ENCODE measurements at regions of chr21 and their contacts with region 1.

Region 1: DNA sequence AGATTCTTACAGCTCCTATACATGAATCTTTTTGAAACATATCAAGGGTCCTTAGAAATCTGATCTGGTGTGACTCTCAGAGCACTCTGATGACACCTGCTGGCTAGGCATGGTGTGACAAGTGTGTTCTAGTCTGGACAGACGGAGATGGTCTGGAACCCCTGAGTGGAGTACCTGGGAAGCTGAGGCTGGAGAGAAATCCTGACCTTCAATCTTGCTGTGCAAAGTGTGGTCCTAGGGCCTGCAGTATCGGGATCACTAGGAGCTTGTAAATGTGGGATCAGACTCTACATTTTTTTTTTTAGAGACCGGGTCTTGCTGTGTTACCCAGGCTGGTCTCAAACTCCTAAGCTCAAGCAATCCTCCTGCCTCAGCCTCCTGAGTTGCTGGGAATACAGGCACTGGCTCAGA is 78.6 kb upstream of the SOD1 start:
- DNase-seq: no peak
- H3K4me3 ChIP-seq: no peak overlapping the region
- CTCF ChIP-seq: peak; percentile 84

Region 2: GRCh38 chr21:31107871-31108270 is 473.0 kb before region 1 on chr21:
- CTCF ChIA-PET with region 1: interaction called, 18 read pairs
- POLR2A ChIA-PET with region 1: no interaction called
- DNase-seq: no peak
- H3K4me3 ChIP-seq: no peak overlapping the region
- CTCF ChIP-seq: no peak

Region 3: DNA sequence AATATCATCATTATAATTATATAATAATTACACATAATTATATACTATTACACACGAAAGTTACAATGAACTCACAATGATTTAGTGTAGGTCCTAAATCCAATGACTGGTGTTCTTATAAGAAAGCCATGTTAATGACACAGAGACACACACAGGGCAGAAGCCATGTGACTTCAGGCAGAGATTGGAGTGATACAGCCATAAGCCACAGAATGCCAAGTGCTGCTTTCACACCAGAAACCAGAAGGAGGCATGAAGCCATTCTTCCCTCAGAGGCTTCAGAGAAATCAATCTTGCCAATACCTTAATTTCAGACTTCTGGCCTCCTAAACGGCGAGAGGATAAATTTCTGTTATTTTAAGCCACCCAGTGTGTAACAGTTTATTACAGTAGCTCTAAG is 395.2 kb before region 1 on chr21:
- CTCF ChIA-PET with region 1: interaction called, 88 read pairs
- POLR2A ChIA-PET with region 1: no interaction called
- DNase-seq: no peak
- H3K4me3 ChIP-seq: no peak overlapping the region
- CTCF ChIP-seq: no peak

Region 4: GRCh38 chr21:31258073-31258472 is 322.8 kb before region 1 on chr21:
- CTCF ChIA-PET with region 1: interaction called, 10 read pairs
- POLR2A ChIA-PET with region 1: no interaction called
- DNase-seq: no peak
- H3K4me3 ChIP-seq: no peak overlapping the region
- CTCF ChIP-seq: no peak

Region 5: GRCh38 chr21:31548688-31549087 is 32.2 kb before region 1 on chr21:
- CTCF ChIA-PET with region 1: interaction called, 16 read pairs
- POLR2A ChIA-PET with region 1: no interaction called
- DNase-seq: no peak
- H3K4me3 ChIP-seq: no peak overlapping the region
- CTCF ChIP-seq: no peak

Region 6: DNA sequence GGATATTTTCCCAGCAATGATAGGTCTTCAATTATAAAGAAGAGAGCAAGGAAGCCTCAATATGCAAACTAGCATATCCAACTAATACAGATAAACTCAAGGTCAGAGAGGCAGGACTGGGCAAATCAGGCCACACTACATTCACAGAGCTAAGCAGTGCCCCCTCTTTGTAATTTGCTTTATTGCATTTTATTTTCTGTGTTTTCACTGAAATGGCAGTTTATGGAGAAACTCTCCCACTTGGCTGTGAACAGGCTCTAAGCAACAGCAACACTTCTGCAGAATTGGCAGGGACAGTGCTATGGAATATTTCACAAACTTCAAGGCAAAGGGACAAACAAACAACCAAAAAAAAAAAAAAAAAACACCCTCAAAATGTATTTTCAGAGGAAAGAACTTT is 14.8 kb before region 1 on chr21:
- CTCF ChIA-PET with region 1: interaction called, 37 read pairs
- POLR2A ChIA-PET with region 1: no interaction called
- DNase-seq: no peak
- H3K4me3 ChIP-seq: no peak overlapping the region
- CTCF ChIP-seq: no peak

Region 7: GRCh38 chr21:31604591-31605190 is 23.8 kb after region 1 on chr21:
- CTCF ChIA-PET with region 1: interaction called, 60 read pairs
- POLR2A ChIA-PET with region 1: no interaction called
- DNase-seq: no peak
- H3K4me3 ChIP-seq: no peak overlapping the region
- CTCF ChIP-seq: peak; percentile 82

Region 8: DNA sequence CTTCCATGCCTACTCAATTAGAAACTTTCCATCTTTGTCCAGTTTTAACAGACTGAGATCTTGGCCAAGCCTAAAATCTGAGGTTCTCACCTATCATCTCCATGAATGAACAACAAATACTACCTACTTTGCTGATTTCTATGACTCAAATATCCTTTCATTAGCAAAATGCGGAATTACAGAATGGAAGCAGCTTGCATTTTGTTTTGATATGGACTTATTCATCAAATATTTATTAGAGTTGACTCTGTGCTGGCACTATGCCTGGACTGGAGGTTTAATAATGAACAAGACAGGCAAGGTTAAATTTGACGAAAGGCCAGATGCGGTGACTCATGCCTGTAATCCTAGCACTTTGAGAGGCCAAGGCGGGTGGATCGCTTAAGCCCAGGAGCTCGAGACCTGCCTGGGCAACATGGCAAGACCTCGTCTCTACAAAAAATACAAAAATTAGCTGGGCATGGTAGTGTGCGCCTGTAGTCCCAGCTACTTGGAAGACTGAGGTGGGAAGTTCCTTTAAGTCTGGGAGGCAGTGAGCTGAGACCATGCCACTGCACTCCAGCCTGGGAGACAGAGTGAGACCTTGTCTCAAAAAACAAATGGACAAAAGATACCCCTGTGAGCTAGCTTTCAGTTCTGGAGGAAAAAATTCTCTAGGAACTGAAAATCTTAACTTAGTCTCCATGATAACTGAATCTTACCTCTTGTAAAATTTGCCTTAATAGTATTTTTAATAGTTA is 49.3 kb after region 1 on chr21:
- CTCF ChIA-PET with region 1: no interaction called
- POLR2A ChIA-PET with region 1: no interaction called
- DNase-seq: peak; percentile 56
- H3K4me3 ChIP-seq: no peak overlapping the region
- CTCF ChIP-seq: no peak

Region 9: DNA sequence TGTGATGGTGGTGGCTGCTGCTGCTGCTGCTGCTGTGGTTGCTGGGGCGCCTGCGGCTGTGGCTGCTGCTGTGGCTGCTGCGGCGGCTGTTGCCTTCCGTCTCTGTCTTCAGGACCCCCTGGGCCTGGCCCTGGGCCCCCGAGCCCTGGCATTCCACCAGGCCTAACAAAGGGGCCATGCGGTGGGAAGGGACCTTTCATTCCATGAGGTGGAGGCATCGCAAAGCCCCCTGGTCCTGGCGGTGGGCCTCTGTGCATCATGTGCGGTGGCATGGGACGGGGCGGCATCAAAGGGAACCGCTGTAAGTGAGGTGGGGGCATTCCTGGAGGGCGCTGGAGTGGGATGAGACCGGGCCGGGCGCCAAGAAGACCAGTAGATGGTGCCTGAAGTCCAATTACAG is 91.1 kb after region 1 on chr21:
- CTCF ChIA-PET with region 1: no interaction called
- POLR2A ChIA-PET with region 1: no interaction called
- DNase-seq: no peak
- H3K4me3 ChIP-seq: no peak overlapping the region
- CTCF ChIP-seq: no peak